Activated CD4-positive, alpha-beta T cell treated with anti-CD3 and anti-CD28 coated beads, Interleukin-2, amount 10 ng/mL, durations not matched to agents 7 days and 5 days (primary cell): ENCODE measurements at regions of chr1 and their contacts with region 1.

Region 1: DNA sequence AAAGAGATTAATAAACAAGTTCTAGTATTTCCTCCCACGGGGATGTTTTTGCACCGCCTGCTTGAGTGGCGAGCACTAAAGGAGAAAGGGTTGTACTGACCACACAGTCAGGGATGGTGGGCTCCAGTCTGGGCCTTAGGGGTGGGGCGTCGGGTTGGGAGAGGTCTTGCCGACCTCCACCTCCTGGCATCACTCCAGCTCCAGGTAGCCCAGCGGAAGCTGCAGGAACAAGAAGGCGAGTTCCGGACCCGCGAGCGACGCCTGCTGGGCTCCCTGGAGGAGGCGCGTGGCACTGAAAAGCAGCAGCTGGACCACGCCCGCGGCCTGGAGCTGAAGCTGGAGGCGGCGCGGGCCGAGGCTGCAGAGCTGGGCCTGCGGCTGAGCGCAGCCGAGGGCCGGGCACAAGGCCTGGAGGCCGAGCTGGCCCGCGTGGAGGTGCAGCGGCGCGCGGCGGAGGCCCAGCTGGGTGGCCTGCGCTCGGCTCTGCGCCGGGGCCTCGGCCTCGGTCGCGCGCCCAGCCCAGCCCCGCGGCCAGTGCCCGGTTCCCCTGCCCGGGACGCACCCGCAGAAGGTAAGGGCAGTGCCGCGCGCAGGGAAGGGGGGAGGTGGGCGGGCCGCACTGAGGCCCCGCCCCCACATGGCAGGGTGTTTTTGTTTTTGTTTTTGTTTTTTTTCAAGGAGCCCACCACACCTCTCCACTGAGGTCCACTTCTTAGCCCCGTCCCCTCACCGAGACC is 19.7 kb downstream of the MFAP2 start:
- DNase-seq: peak; percentile 84
- H3K4me3 Mint-ChIP-seq: peak overlapping the region; percentile 67
- H3K27ac Mint-ChIP-seq: peak overlapping the region; percentile 80
- H3K4me1 Mint-ChIP-seq: peaks cover 13% of the 10 kb centered on the region
- H3K27me3 Mint-ChIP-seq: no peaks in the 10 kb centered on the region

Region 2: DNA sequence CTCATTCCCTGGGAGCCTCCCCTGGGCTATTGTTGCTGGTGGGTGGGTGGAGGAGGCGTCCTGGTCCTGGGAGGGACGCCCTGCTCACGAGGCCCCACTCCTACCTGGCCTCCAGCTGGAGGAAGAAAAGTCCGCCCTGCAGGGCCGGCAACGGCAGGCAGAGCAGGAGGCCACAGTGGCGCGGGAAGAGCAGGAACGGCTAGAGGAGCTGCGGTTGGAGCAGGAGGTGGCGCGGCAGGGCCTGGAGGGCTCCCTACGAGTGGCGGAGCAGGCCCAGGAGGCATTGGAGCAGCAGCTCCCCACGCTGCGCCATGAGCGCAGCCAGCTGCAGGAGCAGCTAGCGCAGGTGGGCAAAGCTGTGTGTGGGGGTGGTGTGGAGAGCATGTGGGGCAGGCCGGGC is 14.1 kb before region 1 on chr1:
- CTCF ChIA-PET with region 1: interaction called, 12 read pairs
- POLR2A ChIA-PET with region 1: no interaction called
- DNase-seq: no peak
- H3K4me3 Mint-ChIP-seq: no peak overlapping the region
- H3K27ac Mint-ChIP-seq: no peak overlapping the region
- H3K4me1 Mint-ChIP-seq: no peaks in the 10 kb centered on the region
- H3K27me3 Mint-ChIP-seq: no peaks in the 10 kb centered on the region